Activated T-helper 1 cell treated with anti-CD3 and anti-CD28 coated beads, Interleukin-12 subunit alpha, Interleukin-12 subunit beta, Interleukin-2, Interleukin-4 antibody, amounts not matched to agents 30 ng/mL and 10 ng/mL and 1 ng/mL, durations not matched to agents 14 hours and 24 hours and 36 hours (primary cell): ENCODE measurements at regions of chr12 and their contacts with region 1.

Region 1: GRCh38 chr12:107093417-107094182 is at the start of gene CRY1:
- DNase-seq: peak; percentile 89
- H3K4me3 Mint-ChIP-seq: no peak within 1 kb of the TSS
- H3K27ac Mint-ChIP-seq: no peak within 1 kb of the TSS
- H3K4me1 Mint-ChIP-seq: peaks cover 13% of the 10 kb centered on the region
- H3K27me3 Mint-ChIP-seq: peaks cover 10% of the 10 kb centered on the region
- total RNA-seq, gene CRY1: 23.4 and 23.5 TPM in 2 replicates

Region 2: GRCh38 chr12:106247674-106248311 is 845.8 kb before region 1 on chr12 and contains the start of gene CKAP4:
- intact Hi-C with region 1: loop called (anchors 10 kb)
- DNase-seq: peak; percentile 37
- H3K4me3 Mint-ChIP-seq: peak within 1 kb of the TSS; percentile 66
- H3K27ac Mint-ChIP-seq: peak within 1 kb of the TSS; percentile 15
- H3K4me1 Mint-ChIP-seq: no peaks in the 10 kb centered on the region
- H3K27me3 Mint-ChIP-seq: peaks cover 14% of the 10 kb centered on the region
- total RNA-seq, gene CKAP4: 4.8 and 5.1 TPM in 2 replicates

Region 3: DNA sequence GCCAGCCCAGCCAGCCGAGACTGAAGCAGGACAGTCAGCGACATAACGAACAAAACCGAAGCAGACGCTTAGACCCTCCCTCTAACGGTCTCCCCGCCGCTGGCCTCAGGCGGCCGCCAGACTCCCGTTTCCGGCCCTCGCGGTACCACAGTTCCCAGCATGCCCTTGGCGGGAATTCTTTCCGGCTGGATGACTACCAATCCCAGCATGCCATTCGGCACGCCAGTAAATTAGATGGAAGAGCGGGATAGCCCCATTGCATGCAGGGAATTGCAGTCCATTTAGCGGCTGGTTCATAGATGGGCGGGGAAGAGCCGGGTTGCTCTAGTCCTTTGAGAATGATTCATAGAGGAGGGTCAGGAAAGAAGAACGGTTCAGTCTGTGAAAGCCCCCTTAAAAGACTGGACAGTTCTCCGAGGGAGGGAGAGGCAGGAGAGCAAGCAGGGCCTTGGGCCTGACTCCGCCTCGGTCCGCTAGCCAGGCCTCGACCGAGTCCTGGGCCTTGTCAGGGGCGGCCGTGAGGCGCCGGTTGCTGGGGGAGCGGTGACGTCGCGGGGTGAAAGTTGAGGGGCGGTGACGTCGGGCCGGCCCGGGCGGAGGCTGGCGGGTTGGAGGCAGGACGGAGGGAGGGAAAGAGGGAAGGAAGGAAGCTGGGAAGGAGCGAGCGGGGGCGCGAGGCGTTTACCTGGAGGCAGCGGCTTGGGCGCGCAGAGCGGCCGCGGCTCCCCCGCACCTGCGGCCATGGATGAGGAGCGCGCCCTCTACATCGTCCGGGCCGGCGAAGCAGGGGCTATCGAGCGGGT is 319.4 kb before region 1 on chr12 and contains the start of gene RIC8B:
- intact Hi-C with region 1: loop called (anchors 1 kb)
- DNase-seq: peak; percentile 77
- H3K4me3 Mint-ChIP-seq: peak within 1 kb of the TSS; percentile 100
- H3K27ac Mint-ChIP-seq: peak within 1 kb of the TSS; percentile 98
- H3K4me1 Mint-ChIP-seq: peaks cover 37% of the 10 kb centered on the region
- H3K27me3 Mint-ChIP-seq: no peaks in the 10 kb centered on the region
- total RNA-seq, gene RIC8B: 11.4 and 12.3 TPM in 2 replicates

Region 4: GRCh38 chr12:106986625-106987430 is 106.8 kb before region 1 on chr12 and contains the start of gene MTERF2:
- intact Hi-C with region 1: loop called (anchors 1 kb)
- DNase-seq: peak; percentile 69
- H3K4me3 Mint-ChIP-seq: peak within 1 kb of the TSS; percentile 91
- H3K27ac Mint-ChIP-seq: peak within 1 kb of the TSS; percentile 85
- H3K4me1 Mint-ChIP-seq: peaks cover 41% of the 10 kb centered on the region
- H3K27me3 Mint-ChIP-seq: peaks cover 2% of the 10 kb centered on the region
- total RNA-seq, gene MTERF2: 3.9 and 5.2 TPM in 2 replicates

Region 5: GRCh38 chr12:107225635-107226034 is 132.0 kb after region 1 on chr12:
- intact Hi-C with region 1: no loop called
- DNase-seq: no peak
- H3K4me3 Mint-ChIP-seq: no peak overlapping the region
- H3K27ac Mint-ChIP-seq: no peak overlapping the region
- H3K4me1 Mint-ChIP-seq: no peaks in the 10 kb centered on the region
- H3K27me3 Mint-ChIP-seq: peaks cover 26% of the 10 kb centered on the region

Region 6: DNA sequence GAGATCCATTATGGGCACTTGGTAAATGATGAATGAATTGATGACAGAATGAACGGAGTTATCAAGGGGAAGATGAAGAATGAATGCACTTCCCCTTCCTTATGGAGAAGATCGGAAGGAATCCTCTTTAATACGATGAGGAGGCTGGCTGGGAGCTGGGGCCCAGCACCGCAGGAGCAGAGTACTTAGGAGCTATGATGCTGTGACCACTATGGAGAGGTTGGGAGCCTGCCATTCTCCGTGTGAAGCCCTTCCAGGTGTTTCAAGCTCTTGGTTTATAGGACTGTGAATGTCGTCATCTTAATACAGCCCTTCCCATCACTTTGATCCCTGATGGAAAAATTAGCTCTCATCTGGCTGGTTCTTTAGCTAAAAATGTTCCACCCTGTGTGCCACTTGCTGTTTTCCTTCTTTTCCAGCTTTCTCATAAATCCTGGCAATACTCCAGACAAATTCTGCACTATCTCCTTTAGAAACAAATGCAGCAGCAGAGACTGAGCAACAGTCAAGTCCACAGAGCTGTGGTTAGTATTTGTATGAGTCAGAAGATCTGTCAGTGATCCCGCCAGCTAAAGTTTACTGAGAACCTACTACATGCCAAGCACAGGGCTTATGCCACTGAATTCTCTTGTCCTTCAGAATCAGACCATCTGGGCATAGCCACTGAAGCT is 262.8 kb after region 1 on chr12:
- intact Hi-C with region 1: loop called (anchors 1 kb)
- DNase-seq: no peak
- H3K4me3 Mint-ChIP-seq: peak overlapping the region; percentile 19
- H3K27ac Mint-ChIP-seq: no peak overlapping the region
- H3K4me1 Mint-ChIP-seq: peaks cover 74% of the 10 kb centered on the region
- H3K27me3 Mint-ChIP-seq: peaks cover 2% of the 10 kb centered on the region

Region 7: GRCh38 chr12:107685360-107686248 is 592.0 kb after region 1 on chr12 and contains the start of gene PWP1:
- intact Hi-C with region 1: loop called (anchors 2 kb)
- DNase-seq: peak; percentile 95
- H3K4me3 Mint-ChIP-seq: peak within 1 kb of the TSS; percentile 96
- H3K27ac Mint-ChIP-seq: peak within 1 kb of the TSS; percentile 97
- H3K4me1 Mint-ChIP-seq: peaks cover 36% of the 10 kb centered on the region
- H3K27me3 Mint-ChIP-seq: no peaks in the 10 kb centered on the region
- total RNA-seq, gene PWP1: 54.4 and 57.1 TPM in 2 replicates